Naive thymus-derived CD4-positive, alpha-beta T cell (primary cell): ENCODE measurements at regions of chr5 and their contacts with region 1.

Region 1: GRCh38 chr5:176596689-176597416 is 13.1 kb downstream of the GPRIN1 start:
- DNase-seq: peak; percentile 53 to 72 (median 67)
- ATAC-seq: peak; percentile 88
- H3K4me3 ChIP-seq: peak overlapping the region; percentile 41
- H3K4me3 Mint-ChIP-seq: peak overlapping the region; percentile 69 to 83 (median 79)
- H3K27ac ChIP-seq: peak overlapping the region; percentile 21
- H3K27ac Mint-ChIP-seq: peak overlapping the region in 7 of 9 donors; percentile 36 to 75 (median 50)
- H3K4me1 ChIP-seq: peaks cover 7% of the 10 kb centered on the region in 2 donors
- H3K4me1 Mint-ChIP-seq: peaks cover 4 to 8% (median 6%) of the 10 kb centered on the region in 7 donors
- H3K27me3 ChIP-seq: no peaks in the 10 kb centered on the region
- H3K27me3 Mint-ChIP-seq: peaks cover 0 to 4% (median 0%) of the 10 kb centered on the region in 5 donors

Region 2: GRCh38 chr5:176361437-176362232 is 235.2 kb before region 1 on chr5 and contains the start of gene KIAA1191:
- CTCF ChIA-PET with region 1: no interaction called
- POLR2A ChIA-PET with region 1: no interaction called
- intact Hi-C with region 1: loop called in 1 of 2 experiments (anchors 2 kb)
- DNase-seq: peak; percentile 80 to 96 (median 93)
- ATAC-seq: peak; percentile 96
- H3K4me3 ChIP-seq: peak within 1 kb of the TSS; percentile 82
- H3K4me3 Mint-ChIP-seq: peak within 1 kb of the TSS; percentile 93 to 99 (median 98)
- H3K27ac ChIP-seq: peak within 1 kb of the TSS; percentile 80
- H3K27ac Mint-ChIP-seq: peak within 1 kb of the TSS; percentile 91 to 99 (median 94)
- H3K4me1 ChIP-seq: peaks cover 19 to 24% of the 10 kb centered on the region in 2 donors
- H3K4me1 Mint-ChIP-seq: peaks cover 21 to 49% (median 38%) of the 10 kb centered on the region in 7 donors
- H3K27me3 ChIP-seq: no peaks in the 10 kb centered on the region
- H3K27me3 Mint-ChIP-seq: no peaks in the 10 kb centered on the region
- total RNA-seq, gene KIAA1191: 59.4 to 76.6 (median 65.9) TPM

Region 3: DNA sequence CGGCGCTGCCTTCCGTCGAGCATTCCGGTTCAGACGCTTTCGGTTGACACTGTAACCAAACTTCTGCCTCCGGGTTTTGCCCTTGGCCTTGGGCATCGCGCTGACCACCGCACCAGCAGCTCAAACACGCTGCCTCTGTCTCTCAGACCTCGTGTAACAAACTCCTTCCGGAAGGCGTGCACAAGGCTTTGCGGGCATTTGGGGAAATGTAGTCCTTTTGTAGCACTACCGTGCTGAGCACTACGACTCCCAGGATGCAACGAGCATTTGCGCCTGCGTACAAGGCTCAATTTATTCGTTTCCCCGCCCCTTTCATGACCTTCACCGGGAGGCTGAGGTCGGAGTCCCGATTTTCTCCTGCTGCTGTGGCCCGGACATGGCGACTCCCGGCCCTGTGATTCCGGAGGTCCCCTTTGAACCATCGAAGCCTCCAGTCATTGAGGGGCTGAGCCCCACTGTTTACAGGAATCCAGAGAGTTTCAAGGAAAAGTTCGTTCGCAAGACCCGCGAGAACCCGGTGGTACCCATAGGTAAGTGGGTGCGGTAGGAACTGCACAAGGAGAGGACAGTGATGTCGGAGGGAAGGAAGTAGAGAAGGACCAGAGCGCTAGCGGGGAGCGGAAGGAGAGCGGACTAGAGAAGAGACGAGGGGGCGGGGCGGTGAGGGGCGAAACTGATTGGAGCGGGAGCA is 208.3 kb before region 1 on chr5 and contains the starts of genes HIGD2A and NOP16:
- CTCF ChIA-PET with region 1: no interaction called
- POLR2A ChIA-PET with region 1: no interaction called
- intact Hi-C with region 1: loop called in 1 of 2 experiments (anchors 1 kb)
- DNase-seq: peak; percentile 89 to 99 (median 98)
- ATAC-seq: peak; percentile 95
- H3K4me3 ChIP-seq: peak within 1 kb of the TSS; percentile 95
- H3K4me3 Mint-ChIP-seq: peak within 1 kb of the TSS; percentile 94 to 100 (median 99)
- H3K27ac ChIP-seq: peak within 1 kb of the TSS; percentile 93
- H3K27ac Mint-ChIP-seq: peak within 1 kb of the TSS; percentile 91 to 100 (median 99)
- H3K4me1 ChIP-seq: peaks cover 18% of the 10 kb centered on the region in 2 donors
- H3K4me1 Mint-ChIP-seq: peaks cover 14 to 42% (median 35%) of the 10 kb centered on the region in 7 donors
- H3K27me3 ChIP-seq: no peaks in the 10 kb centered on the region
- H3K27me3 Mint-ChIP-seq: no peaks in the 10 kb centered on the region
- total RNA-seq, gene HIGD2A: 86.8 to 124 (median 112) TPM
- total RNA-seq, gene NOP16: 12.8 to 35.3 (median 22.2) TPM

Region 4: DNA sequence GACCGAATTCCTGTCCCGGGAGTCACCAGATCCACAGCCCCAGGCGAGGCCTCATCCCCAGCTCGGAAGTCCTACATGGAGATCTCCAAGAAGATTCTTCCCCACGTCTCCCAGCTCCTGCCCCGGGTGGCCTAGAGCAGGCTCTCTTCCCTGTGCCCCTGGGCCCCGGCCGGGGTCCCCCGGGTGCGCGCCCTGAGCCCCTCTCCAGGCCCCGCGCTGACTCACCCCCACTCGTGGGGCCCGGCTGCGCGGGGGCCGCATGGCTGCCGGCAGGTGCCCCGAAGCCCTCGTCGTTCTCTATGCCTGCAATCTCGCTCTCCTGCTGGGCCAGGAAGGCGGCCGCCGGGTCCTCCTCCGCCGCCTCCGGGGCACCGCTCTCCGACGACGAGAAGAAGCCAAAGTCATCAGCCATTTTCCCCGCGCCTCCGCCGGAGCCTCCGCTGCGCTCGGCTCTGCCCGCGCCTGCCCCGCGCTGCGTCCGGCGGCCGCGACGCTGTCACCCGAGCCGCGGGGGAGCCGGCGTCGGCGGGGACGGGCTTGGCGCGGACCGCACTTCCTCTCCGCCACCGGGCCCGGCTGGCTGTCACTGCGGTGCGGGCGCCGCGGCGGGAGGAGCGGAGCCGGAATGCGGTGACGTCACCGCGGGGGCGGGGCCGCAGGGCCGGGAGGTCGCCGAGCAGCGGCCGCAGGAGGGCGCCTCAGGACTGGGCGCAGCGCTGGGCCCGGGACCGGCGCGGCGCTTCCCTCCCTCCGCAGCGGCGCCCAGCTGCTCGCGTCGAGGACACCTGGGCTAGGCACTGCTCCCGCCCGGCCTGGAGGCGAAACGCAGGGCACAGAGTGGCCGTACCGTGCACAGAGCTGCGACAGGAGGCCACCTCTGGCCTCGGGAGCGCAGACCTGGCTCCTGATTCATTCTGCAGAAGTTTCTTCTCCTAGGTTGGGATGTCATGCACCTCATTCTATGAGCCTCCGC is 180.6 kb before region 1 on chr5 and contains the start of gene CLTB:
- CTCF ChIA-PET with region 1: interaction called, 20 read pairs
- POLR2A ChIA-PET with region 1: no interaction called
- intact Hi-C with region 1: loop called (anchors 1 kb)
- DNase-seq: peak; percentile 73 to 86 (median 84)
- ATAC-seq: peak; percentile 97
- H3K4me3 ChIP-seq: peak within 1 kb of the TSS; percentile 52
- H3K4me3 Mint-ChIP-seq: peak within 1 kb of the TSS; percentile 74 to 89 (median 84)
- H3K27ac ChIP-seq: peak within 1 kb of the TSS; percentile 86
- H3K27ac Mint-ChIP-seq: peak within 1 kb of the TSS; percentile 71 to 91 (median 87)
- H3K4me1 ChIP-seq: peaks cover 21 to 28% of the 10 kb centered on the region in 2 donors
- H3K4me1 Mint-ChIP-seq: peaks cover 17 to 53% (median 47%) of the 10 kb centered on the region in 7 donors
- H3K27me3 ChIP-seq: no peaks in the 10 kb centered on the region
- H3K27me3 Mint-ChIP-seq: peaks cover 0 to 19% (median 0%) of the 10 kb centered on the region in 5 donors
- total RNA-seq, gene CLTB: 30.6 to 67.2 (median 63.8) TPM

Region 5: GRCh38 chr5:176573564-176574296 is 23.1 kb before region 1 on chr5:
- CTCF ChIA-PET with region 1: interaction called, 9 read pairs
- POLR2A ChIA-PET with region 1: no interaction called
- intact Hi-C with region 1: loop called in 1 of 2 experiments (anchors 1 kb)
- DNase-seq: peak; percentile 48 to 80 (median 67)
- ATAC-seq: peak; percentile 88
- H3K4me3 ChIP-seq: no peak overlapping the region
- H3K4me3 Mint-ChIP-seq: no peak overlapping the region
- H3K27ac ChIP-seq: no peak overlapping the region
- H3K27ac Mint-ChIP-seq: peak overlapping the region in 1 of 9 donors; percentile 46
- H3K4me1 ChIP-seq: no peaks in the 10 kb centered on the region
- H3K4me1 Mint-ChIP-seq: peaks cover 0 to 11% (median 6%) of the 10 kb centered on the region in 7 donors
- H3K27me3 ChIP-seq: no peaks in the 10 kb centered on the region
- H3K27me3 Mint-ChIP-seq: peaks cover 0 to 4% (median 0%) of the 10 kb centered on the region in 5 donors

Region 6: GRCh38 chr5:176609724-176610434 is 13.0 kb after region 1 on chr5 and contains the start of gene GPRIN1:
- CTCF ChIA-PET with region 1: no interaction called
- POLR2A ChIA-PET with region 1: no interaction called
- intact Hi-C with region 1: loop called in 1 of 2 experiments (anchors 1 kb)
- DNase-seq: peak in 5 of 9 donors; percentile 15 to 85 (median 39)
- ATAC-seq: peak; percentile 72
- H3K4me3 ChIP-seq: no peak within 1 kb of the TSS
- H3K4me3 Mint-ChIP-seq: peak within 1 kb of the TSS; percentile 82 to 95 (median 90)
- H3K27ac ChIP-seq: no peak within 1 kb of the TSS
- H3K27ac Mint-ChIP-seq: peak within 1 kb of the TSS in 3 of 9 donors; percentile 21 to 77 (median 45)
- H3K4me1 ChIP-seq: peaks cover 3 to 4% of the 10 kb centered on the region in 2 donors
- H3K4me1 Mint-ChIP-seq: peaks cover 4 to 17% (median 12%) of the 10 kb centered on the region in 7 donors
- H3K27me3 ChIP-seq: peaks cover 3 to 5% of the 10 kb centered on the region in 2 donors
- H3K27me3 Mint-ChIP-seq: peaks cover 20 to 44% (median 28%) of the 10 kb centered on the region in 5 donors
- total RNA-seq, gene GPRIN1: 0.08 to 2.3 (median 0.32) TPM in 4 of 5 experiments, not detected in the other

Region 7: DNA sequence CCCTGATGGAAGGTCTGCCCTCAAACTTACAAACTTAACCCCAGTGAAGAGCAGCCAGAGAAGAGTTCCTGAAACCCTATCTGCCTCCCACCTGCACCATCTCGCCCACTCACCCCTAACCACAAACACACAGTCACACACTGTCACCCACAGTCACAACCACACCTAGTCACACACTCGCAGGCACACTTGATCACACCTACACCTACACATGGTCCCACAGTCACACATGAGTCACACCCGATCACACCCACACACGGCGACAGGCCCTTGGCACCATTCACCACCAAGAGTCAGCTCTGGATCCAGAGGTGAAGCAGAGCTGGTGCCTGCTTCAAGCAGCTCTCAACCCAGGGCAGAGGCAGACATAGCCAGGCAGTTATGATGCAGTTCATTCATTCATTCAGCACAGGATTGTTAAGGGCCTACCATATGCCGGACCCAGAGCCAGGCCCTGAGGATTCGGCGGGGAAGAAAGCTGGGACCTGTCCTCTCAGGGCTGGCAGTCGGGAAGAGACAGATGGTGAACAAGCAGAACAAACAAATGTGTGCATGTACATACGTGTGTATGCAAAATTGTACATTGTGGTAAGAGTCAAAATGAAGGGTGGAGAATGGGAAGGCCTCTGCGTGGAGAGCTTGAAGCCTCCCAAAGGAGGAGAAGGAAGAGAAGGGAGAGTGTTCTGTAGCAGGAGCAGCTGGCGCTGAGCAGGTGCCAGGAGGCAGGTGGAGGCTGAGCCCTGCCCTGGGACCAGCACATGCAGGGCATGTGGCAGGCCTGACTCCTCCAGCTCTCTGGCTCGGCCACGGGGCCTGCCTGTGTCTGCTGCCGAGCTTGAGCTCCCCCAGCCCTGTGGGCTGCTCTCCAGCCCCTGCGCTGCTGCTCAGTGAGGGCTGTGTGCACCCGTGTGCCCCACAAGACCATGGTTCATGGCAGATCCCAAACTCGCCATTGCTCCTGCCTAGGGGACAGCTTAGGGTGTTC is 56.8 kb after region 1 on chr5:
- CTCF ChIA-PET with region 1: no interaction called
- POLR2A ChIA-PET with region 1: no interaction called
- intact Hi-C with region 1: no loop called
- DNase-seq: peak in 1 of 9 donors; percentile 81
- ATAC-seq: peak; percentile 39
- H3K4me3 ChIP-seq: no peak overlapping the region
- H3K4me3 Mint-ChIP-seq: peak overlapping the region in 4 of 10 donors; percentile 2 to 6 (median 3)
- H3K27ac ChIP-seq: no peak overlapping the region
- H3K27ac Mint-ChIP-seq: peak overlapping the region; percentile 6 to 84 (median 53)
- H3K4me1 ChIP-seq: peaks cover 18 to 42% of the 10 kb centered on the region in 2 donors
- H3K4me1 Mint-ChIP-seq: peaks cover 36 to 66% (median 49%) of the 10 kb centered on the region in 7 donors
- H3K27me3 ChIP-seq: no peaks in the 10 kb centered on the region
- H3K27me3 Mint-ChIP-seq: no peaks in the 10 kb centered on the region

Region 8: DNA sequence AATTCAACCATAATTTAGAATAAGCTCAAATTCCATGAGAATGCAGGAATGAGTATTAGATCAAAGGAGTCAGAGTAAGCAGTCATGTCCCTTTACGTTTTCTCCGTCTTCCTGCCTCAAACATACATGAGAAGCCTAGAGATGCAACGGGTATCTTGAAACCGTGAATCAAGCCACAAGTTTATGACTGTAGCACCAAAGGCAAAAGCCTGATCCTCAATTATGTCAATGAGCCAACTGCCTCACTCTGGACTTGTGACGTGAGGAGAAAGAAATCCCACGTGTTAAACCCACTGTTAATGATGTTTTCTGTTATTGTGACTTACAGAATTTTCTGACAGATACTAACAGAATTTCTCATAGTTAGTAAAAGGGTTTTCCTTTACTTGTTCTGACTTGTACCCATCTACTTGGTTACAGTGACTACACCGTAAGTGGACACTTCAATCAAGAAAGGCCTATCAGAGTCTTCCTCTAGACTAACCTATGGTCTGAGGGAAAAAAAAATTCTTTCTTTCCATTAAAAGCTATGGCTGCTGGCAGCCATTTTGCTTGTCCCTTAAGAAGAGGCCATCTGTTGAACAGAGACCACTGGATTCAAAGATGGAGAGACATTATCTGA is 337.6 kb after region 1 on chr5:
- CTCF ChIA-PET with region 1: no interaction called
- POLR2A ChIA-PET with region 1: no interaction called
- intact Hi-C with region 1: no loop called
- DNase-seq: no peak
- ATAC-seq: no peak
- H3K4me3 ChIP-seq: no peak overlapping the region
- H3K4me3 Mint-ChIP-seq: no peak overlapping the region
- H3K27ac ChIP-seq: no peak overlapping the region
- H3K27ac Mint-ChIP-seq: peak overlapping the region in 1 of 9 donors; percentile 14
- H3K4me1 ChIP-seq: no peaks in the 10 kb centered on the region
- H3K4me1 Mint-ChIP-seq: peaks cover 3 to 33% (median 20%) of the 10 kb centered on the region in 7 donors
- H3K27me3 ChIP-seq: no peaks in the 10 kb centered on the region
- H3K27me3 Mint-ChIP-seq: no peaks in the 10 kb centered on the region